ENCODE measurements at regions of chr9 and their contacts with region 1.

Region 1: DNA sequence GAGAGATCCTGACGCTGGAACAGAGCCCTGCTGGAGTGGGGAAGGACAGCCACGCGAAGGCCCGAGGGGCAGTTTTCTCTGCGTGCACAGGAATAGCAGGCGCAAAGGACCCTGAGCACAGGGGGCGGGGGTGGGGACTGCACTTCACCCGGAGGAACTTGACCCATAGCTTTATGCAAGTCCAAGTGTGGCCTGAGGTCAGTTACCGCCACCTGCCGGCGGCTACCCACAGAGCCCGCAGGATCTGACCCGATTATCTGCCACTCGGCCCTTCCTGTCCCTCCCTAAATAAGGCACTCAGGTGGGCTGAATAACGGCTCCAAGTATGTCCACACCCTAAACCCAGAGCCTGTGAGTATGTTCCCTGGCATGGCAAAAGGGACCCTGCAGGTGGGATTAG is 65.4 kb upstream of the FCN1 start:
- DNase-seq: no peak
- ATAC-seq: no peak
- H3K4me3 ChIP-seq: no peak overlapping the region
- H3K27ac ChIP-seq: no peak overlapping the region
- H3K4me1 ChIP-seq: no peaks in the 10 kb centered on the region
- H3K27me3 ChIP-seq: no peaks in the 10 kb centered on the region
- CTCF ChIP-seq: peak; percentile 8 to 55 (median 48)
- POLR2A ChIP-seq: no peak

Region 2: GRCh38 chr9:134525841-134526595 is 457.1 kb before region 1 on chr9:
- in situ Hi-C with region 1: no loop called
- intact Hi-C with region 1: no loop called
- DNase-seq: no peak
- ATAC-seq: no peak
- H3K4me3 ChIP-seq: no peak overlapping the region
- H3K27ac ChIP-seq: peak overlapping the region in 1 of 4 donors; percentile 43
- H3K4me1 ChIP-seq: no peaks in the 10 kb centered on the region
- H3K27me3 ChIP-seq: peaks cover 17 to 22% (median 18%) of the 10 kb centered on the region in 3 donors
- CTCF ChIP-seq: no peak
- POLR2A ChIP-seq: no peak

Region 3: GRCh38 chr9:134778841-134779411 is 204.1 kb before region 1 on chr9:
- in situ Hi-C with region 1: no loop called
- intact Hi-C with region 1: loop called (anchors 1 kb)
- DNase-seq: peak in 1 of 2 donors; percentile 26
- ATAC-seq: peak; percentile 22 to 49
- H3K4me3 ChIP-seq: no peak overlapping the region
- H3K27ac ChIP-seq: no peak overlapping the region
- H3K4me1 ChIP-seq: no peaks in the 10 kb centered on the region
- H3K27me3 ChIP-seq: peaks cover 0 to 2% (median 0%) of the 10 kb centered on the region in 3 donors
- CTCF ChIP-seq: peak; percentile 18 to 59 (median 47)
- POLR2A ChIP-seq: no peak

Region 4: GRCh38 chr9:135090547-135090946 is 107.5 kb after region 1 on chr9:
- in situ Hi-C with region 1: no loop called
- intact Hi-C with region 1: no loop called
- DNase-seq: no peak
- ATAC-seq: no peak
- H3K4me3 ChIP-seq: no peak overlapping the region
- H3K27ac ChIP-seq: no peak overlapping the region
- H3K4me1 ChIP-seq: peaks cover 14 to 24% of the 10 kb centered on the region in 2 donors
- H3K27me3 ChIP-seq: peaks cover 20 to 33% (median 32%) of the 10 kb centered on the region in 3 donors
- CTCF ChIP-seq: no peak
- POLR2A ChIP-seq: no peak

Region 5: GRCh38 chr9:136079211-136079915 is 1096.3 kb after region 1 on chr9:
- in situ Hi-C with region 1: no loop called
- intact Hi-C with region 1: no loop called
- DNase-seq: peak in 1 of 2 donors; percentile 23
- ATAC-seq: peak in 1 of 2 donors; percentile 29
- H3K4me3 ChIP-seq: no peak overlapping the region
- H3K27ac ChIP-seq: peak overlapping the region; percentile 67 to 79 (median 74)
- H3K4me1 ChIP-seq: peaks cover 41 to 51% of the 10 kb centered on the region in 2 donors
- H3K27me3 ChIP-seq: no peaks in the 10 kb centered on the region
- CTCF ChIP-seq: no peak
- POLR2A ChIP-seq: no peak

Region 6: DNA sequence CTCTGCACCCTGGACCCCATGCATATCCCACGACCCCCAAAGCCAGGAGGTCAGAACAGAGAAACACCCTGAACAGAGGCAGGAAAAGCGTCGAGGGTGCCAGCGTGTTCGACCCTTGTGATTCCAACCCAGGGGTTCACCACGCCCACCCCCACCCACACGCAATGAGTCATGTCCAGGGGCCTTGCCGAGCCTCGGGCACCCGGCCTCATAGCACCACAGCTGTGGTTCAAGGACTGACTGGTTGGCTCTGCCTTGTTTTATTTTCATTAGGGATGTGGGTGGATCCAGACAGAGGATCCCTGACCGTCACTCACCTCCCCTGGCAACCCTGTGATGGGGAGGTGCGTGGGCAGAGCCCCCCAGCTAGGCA is 1272.1 kb after region 1 on chr9:
- in situ Hi-C with region 1: no loop called
- intact Hi-C with region 1: no loop called
- DNase-seq: no peak
- ATAC-seq: no peak
- H3K4me3 ChIP-seq: no peak overlapping the region
- H3K27ac ChIP-seq: no peak overlapping the region
- H3K4me1 ChIP-seq: no peaks in the 10 kb centered on the region
- H3K27me3 ChIP-seq: peaks cover 13 to 39% (median 24%) of the 10 kb centered on the region in 3 donors
- CTCF ChIP-seq: no peak
- POLR2A ChIP-seq: no peak